Ovary (tissue), 10 donors: ENCODE measurements at regions of chr21 and their contacts with region 1.

Region 1: DNA sequence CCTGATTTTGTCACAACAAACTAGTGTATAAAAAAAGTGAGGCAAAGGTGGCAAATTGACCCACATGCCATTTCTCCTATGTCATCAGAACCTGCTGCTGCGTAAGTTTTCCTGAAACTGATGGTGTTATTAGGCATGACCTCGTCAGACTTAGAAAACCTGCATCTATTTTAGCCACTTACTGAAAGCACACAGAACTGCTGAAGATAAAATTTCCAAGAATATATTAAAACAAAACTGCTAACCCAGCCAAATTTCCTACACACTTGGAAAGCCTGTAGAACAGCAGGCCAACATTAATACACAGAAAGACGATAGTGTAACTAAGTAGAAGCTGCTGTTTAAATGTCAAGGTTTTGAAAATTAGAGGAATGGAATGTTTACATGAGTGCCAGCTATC is 674.5 kb upstream of the CXADR start:
- DNase-seq: peak in 1 of 5 donors; percentile 15
- H3K4me3 ChIP-seq: no peak overlapping the region
- H3K27ac ChIP-seq: peak overlapping the region in 1 of 2 donors; percentile 4
- H3K4me1 ChIP-seq: peaks cover 7% of the 10 kb centered on the region
- H3K27me3 ChIP-seq: no peaks in the 10 kb centered on the region
- CTCF ChIP-seq: no peak
- EP300 ChIP-seq: peak; percentile 25
- POLR2A ChIP-seq: no peak

Region 2: DNA sequence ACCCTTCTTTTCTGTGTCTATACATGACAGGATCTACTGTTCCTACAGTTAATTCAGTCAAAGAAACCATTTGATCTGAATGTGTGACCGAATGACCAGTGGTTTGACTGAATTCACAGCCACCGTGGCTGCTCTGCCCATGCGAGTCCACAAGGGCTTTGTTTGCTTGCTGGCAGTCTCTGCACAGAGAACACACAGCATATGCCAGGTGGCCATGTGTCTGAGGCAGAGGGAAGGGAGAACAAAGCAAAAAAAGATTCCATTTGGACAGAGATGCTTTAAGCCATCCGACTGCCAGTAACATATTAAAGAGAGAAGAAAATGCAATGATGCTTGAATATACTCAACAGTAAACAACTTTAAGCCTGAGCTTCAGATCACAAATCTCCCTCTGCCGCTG is 63.3 kb before region 1 on chr21:
- intact Hi-C with region 1: loop called in 1 of 4 experiments (anchors 10 kb)
- DNase-seq: no peak
- H3K4me3 ChIP-seq: no peak overlapping the region
- H3K27ac ChIP-seq: no peak overlapping the region
- H3K4me1 ChIP-seq: peaks cover 8% of the 10 kb centered on the region
- H3K27me3 ChIP-seq: no peaks in the 10 kb centered on the region
- CTCF ChIP-seq: no peak
- EP300 ChIP-seq: no peak
- POLR2A ChIP-seq: no peak